Activated CD8-positive, alpha-beta T cell treated with anti-CD3 and anti-CD28 coated beads, Interleukin-2, amount 10 ng/mL, durations not matched to agents 7 days and 5 days (primary cell): ENCODE measurements at regions of chr19 and their contacts with region 1.

Region 1: DNA sequence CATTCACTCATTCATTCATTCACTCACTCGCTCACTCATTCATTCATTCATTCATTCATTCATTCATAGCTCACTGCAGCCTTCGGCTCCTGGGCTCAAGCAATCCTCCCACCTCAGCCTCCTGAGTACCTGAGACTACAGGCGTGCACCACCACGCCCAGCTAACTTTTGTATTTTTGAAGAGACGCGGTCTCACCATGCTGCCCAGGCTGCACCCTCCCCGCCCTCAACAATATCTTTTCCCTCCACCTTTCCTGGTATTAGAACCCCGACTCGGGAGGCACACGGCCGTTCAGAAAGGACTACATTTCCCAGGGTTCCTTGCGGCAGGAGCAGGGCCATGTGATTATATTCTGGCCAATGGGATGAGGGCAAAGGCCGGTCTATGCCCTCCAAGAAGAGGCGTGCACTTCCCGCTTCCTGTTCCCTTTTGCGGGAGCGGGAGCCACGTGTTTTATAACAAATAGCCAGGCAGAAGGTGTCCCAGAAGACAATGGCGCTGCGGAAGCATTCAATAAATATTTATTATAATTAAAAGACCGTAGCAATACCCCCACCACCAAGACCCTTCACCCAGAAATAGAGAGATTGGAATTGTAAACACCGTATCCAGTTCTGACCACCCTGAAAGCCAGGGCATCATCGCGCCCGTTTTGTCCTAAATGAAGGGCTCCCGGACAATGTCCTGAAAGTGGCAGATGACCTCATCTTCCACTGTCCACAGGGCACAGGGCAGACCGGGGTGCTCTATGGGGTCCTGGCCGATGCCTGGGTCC is 15.9 kb downstream of the TICAM1 start:
- DNase-seq: peak; percentile 86
- ATAC-seq: peak; percentile 84
- H3K4me3 Mint-ChIP-seq: peak overlapping the region; percentile 59
- H3K27ac Mint-ChIP-seq: peak overlapping the region; percentile 33
- H3K4me1 Mint-ChIP-seq: peaks cover 16% of the 10 kb centered on the region
- H3K27me3 Mint-ChIP-seq: no peaks in the 10 kb centered on the region

Region 2: GRCh38 chr19:4768934-4769777 is 46.5 kb before region 1 on chr19:
- CTCF ChIA-PET with region 1: no interaction called
- POLR2A ChIA-PET with region 1: no interaction called
- DNase-seq: peak; percentile 91
- ATAC-seq: peak; percentile 86
- H3K4me3 Mint-ChIP-seq: no peak overlapping the region
- H3K27ac Mint-ChIP-seq: no peak overlapping the region
- H3K4me1 Mint-ChIP-seq: no peaks in the 10 kb centered on the region
- H3K27me3 Mint-ChIP-seq: peaks cover 2% of the 10 kb centered on the region

Region 3: GRCh38 chr19:4791170-4792018 is 24.2 kb before region 1 on chr19 and contains the start of gene FEM1A:
- CTCF ChIA-PET with region 1: interaction called, 42 read pairs
- POLR2A ChIA-PET with region 1: no interaction called
- DNase-seq: peak; percentile 99
- ATAC-seq: peak; percentile 97
- H3K4me3 Mint-ChIP-seq: peak within 1 kb of the TSS; percentile 81
- H3K27ac Mint-ChIP-seq: peak within 1 kb of the TSS; percentile 90
- H3K4me1 Mint-ChIP-seq: peaks cover 35% of the 10 kb centered on the region
- H3K27me3 Mint-ChIP-seq: no peaks in the 10 kb centered on the region
- total RNA-seq, gene FEM1A: 12.3 to 12.7 TPM

Region 4: DNA sequence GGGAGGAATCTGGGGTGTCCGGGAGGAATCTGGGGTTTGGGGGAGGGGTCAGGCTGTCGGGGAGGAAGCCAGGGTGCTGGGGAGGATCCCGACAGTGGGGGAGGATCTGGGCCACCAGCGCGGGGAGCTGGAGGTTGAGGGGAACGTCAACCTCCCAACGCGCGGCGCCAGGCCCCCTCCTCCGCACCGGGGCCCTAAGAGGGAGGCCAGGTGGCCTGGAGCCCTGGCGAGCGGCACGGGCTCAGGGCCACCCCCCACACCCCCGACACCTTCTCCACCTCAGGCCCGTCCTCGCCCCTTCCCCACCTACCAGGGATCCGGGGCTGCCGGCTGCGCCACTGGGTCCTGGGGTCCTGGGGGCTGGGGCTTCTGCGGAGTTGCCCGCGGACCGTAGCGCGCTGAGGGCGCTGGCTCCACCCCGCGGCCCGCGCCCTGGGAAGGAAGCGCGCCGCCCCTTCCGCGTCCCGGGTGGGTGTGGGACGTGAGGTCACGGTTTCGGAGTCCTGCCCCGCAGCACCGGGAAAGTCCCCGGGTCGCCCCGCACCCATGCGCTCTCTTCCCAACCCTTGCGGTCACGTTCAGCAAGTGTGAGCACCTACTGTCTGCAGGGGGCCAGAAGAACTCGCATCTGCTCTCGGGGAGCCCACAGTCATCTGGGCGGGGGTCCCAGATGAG is 15.8 kb after region 1 on chr19 and contains the start of gene TICAM1:
- CTCF ChIA-PET with region 1: interaction called, 19 read pairs
- POLR2A ChIA-PET with region 1: no interaction called
- DNase-seq: peak; percentile 71
- ATAC-seq: peak; percentile 93
- H3K4me3 Mint-ChIP-seq: peak within 1 kb of the TSS; percentile 83
- H3K27ac Mint-ChIP-seq: peak within 1 kb of the TSS; percentile 86
- H3K4me1 Mint-ChIP-seq: peaks cover 25% of the 10 kb centered on the region
- H3K27me3 Mint-ChIP-seq: no peaks in the 10 kb centered on the region
- total RNA-seq, gene TICAM1: 14.0 to 15.2 TPM

Region 5: DNA sequence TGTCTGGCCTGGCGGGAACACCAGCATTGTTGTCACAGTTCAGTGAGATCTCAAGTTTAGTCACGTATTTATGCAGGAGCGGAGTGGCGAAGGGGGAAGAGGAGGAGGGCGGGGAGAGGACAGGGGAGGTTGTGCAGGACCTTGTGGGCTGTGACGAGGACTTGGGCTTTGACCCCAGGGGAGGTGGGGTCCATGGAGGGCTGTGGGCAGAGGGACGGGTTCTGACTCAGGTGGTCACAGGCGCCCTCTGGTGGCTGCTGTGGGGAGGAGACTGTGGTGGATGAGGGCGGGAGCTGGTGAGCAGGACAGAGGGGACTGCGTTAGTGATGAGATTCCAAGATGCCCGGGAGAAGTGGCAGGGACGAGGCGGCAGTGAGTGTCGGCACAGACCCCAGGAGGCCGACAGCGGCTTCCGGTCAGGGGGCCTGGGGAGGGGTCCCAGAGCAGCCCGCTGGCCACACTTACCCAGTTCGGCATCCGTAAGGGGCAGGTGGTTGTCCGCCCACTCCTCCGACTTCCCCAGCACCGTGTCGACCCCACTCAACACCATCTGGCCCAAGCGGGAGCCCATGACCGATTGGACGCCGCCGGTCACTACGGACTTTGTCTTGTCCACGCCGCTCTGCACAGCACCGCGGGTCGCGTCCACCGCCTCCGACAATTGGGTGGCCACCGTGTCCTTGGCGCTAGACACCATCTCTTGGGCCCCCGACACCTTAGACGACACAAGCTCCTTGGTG is 36.1 kb after region 1 on chr19:
- CTCF ChIA-PET with region 1: interaction called, 167 read pairs
- POLR2A ChIA-PET with region 1: interaction called, 4 read pairs
- DNase-seq: peak; percentile 80
- ATAC-seq: peak; percentile 94
- H3K4me3 Mint-ChIP-seq: no peak overlapping the region
- H3K27ac Mint-ChIP-seq: no peak overlapping the region
- H3K4me1 Mint-ChIP-seq: peaks cover 2% of the 10 kb centered on the region
- H3K27me3 Mint-ChIP-seq: no peaks in the 10 kb centered on the region

Region 6: GRCh38 chr19:4909897-4910593 is 94.4 kb after region 1 on chr19:
- CTCF ChIA-PET with region 1: interaction called, 94 read pairs
- POLR2A ChIA-PET with region 1: no interaction called
- DNase-seq: peak; percentile 98
- ATAC-seq: peak; percentile 83
- H3K4me3 Mint-ChIP-seq: peak overlapping the region; percentile 79
- H3K27ac Mint-ChIP-seq: peak overlapping the region; percentile 84
- H3K4me1 Mint-ChIP-seq: peaks cover 46% of the 10 kb centered on the region
- H3K27me3 Mint-ChIP-seq: no peaks in the 10 kb centered on the region

Region 7: GRCh38 chr19:5031231-5032100 is 215.9 kb after region 1 on chr19:
- CTCF ChIA-PET with region 1: interaction called, 30 read pairs
- POLR2A ChIA-PET with region 1: no interaction called
- DNase-seq: peak; percentile 85
- ATAC-seq: peak; percentile 88
- H3K4me3 Mint-ChIP-seq: no peak overlapping the region
- H3K27ac Mint-ChIP-seq: no peak overlapping the region
- H3K4me1 Mint-ChIP-seq: peaks cover 4% of the 10 kb centered on the region
- H3K27me3 Mint-ChIP-seq: no peaks in the 10 kb centered on the region